H1 (cell line): ENCODE measurements at regions of chr12 and their contacts with region 1.

Region 1: GRCh38 chr12:119020406-119021360 is 39.3 kb downstream of the SRRM4 start:
- DNase-seq: peak; percentile 54 to 94
- H3K4me3 ChIP-seq: peak overlapping the region in 1 of 4 experiments; percentile 31; a peak in 1 of 8 replicates
- H3K27ac ChIP-seq: no peak overlapping the region
- H3K4me1 ChIP-seq: peaks cover 6 to 26% (median 17%) of the 10 kb centered on the region in 4 experiments; a peak in 6 of 7 replicates
- H3K27me3 ChIP-seq: no peaks in the 10 kb centered on the region
- CTCF ChIP-seq: peak; percentile 93 to 99 (median 98)
- EP300 ChIP-seq: no peak
- POLR2A ChIP-seq: no peak
- RAD21 ChIP-seq: peak; percentile 82

Region 2: DNA sequence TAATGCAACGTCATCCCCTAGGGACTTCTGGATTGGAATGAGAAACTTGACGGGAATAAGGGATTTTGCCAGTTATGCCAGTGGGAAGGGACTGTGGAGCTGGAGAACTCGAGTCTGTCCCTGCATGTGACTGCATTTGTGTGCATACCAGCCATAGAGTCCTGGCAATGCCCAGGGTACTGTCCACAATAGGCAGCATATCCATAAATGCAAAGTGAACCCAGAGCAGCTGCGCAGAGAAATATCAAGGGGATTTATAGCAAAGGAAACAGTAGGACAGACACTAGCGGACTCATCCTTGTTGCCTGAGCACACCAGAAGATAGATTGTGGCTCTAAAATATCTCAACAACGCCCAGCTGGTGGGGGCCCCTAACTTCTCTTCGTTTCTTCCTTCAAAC is 286.4 kb before region 1 on chr12:
- CTCF ChIA-PET with region 1: no interaction called
- POLR2A ChIA-PET with region 1: no interaction called
- DNase-seq: no peak
- H3K4me3 ChIP-seq: no peak overlapping the region
- H3K27ac ChIP-seq: no peak overlapping the region
- H3K4me1 ChIP-seq: no peaks in the 10 kb centered on the region
- H3K27me3 ChIP-seq: no peaks in the 10 kb centered on the region
- CTCF ChIP-seq: no peak
- EP300 ChIP-seq: no peak
- POLR2A ChIP-seq: no peak
- RAD21 ChIP-seq: no peak

Region 3: DNA sequence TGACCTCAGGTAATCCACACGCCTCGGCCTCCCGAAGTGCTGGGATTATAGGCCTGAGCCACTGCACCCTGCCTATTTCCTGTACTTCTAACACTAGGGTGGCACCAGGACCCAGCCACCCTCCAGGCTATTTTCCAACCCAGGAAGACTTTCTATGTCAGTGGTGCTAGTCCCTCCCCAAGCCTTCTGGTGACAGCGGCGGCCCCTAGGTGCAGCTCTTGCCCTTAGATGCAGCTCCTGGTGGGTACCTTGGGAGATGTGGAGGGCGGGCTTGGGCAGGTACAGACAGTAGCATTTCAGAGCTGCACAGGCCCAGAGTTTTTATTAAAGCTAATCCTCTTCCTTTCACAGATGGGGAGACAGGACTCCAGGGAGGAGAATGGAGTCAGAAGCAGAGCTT is 23.4 kb after region 1 on chr12:
- CTCF ChIA-PET with region 1: interaction called, 17 read pairs
- POLR2A ChIA-PET with region 1: no interaction called
- DNase-seq: no peak
- H3K4me3 ChIP-seq: no peak overlapping the region
- H3K27ac ChIP-seq: no peak overlapping the region
- H3K4me1 ChIP-seq: no peaks in the 10 kb centered on the region
- H3K27me3 ChIP-seq: no peaks in the 10 kb centered on the region
- CTCF ChIP-seq: no peak
- EP300 ChIP-seq: no peak
- POLR2A ChIP-seq: no peak
- RAD21 ChIP-seq: no peak; a peak in 1 of 4 replicates

Region 4: GRCh38 chr12:119117941-119118340 is 97.3 kb after region 1 on chr12:
- CTCF ChIA-PET with region 1: no interaction called
- POLR2A ChIA-PET with region 1: no interaction called
- DNase-seq: no peak
- H3K4me3 ChIP-seq: no peak overlapping the region
- H3K27ac ChIP-seq: no peak overlapping the region
- H3K4me1 ChIP-seq: 0 out of 7 replicates have a peak, but pooled peaks cover 0 to 2% (median 0%) of the 10 kb centered on the region in 4 experiments
- H3K27me3 ChIP-seq: no peaks in the 10 kb centered on the region
- CTCF ChIP-seq: no peak
- EP300 ChIP-seq: no peak
- POLR2A ChIP-seq: no peak
- RAD21 ChIP-seq: no peak

Region 5: DNA sequence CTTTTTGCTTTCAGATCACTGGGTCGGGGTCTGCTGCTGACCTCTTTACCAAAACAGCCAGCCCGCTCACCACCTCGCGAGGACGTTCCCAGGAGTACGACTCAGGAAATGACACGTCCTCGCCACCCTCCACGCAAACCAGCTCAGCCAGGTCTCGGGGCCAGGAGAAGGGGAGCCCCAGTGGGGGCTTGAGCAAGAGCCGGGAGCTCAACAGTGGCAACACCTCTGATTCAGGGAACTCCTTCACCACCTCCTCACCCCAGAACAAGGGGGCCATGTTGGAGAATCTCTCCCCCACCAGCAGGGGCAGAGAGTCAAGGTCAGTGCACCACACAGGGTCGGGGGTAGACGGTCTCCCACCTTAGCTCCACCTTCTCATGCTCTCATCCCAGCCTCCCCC is 124.7 kb after region 1 on chr12:
- CTCF ChIA-PET with region 1: no interaction called
- POLR2A ChIA-PET with region 1: no interaction called
- DNase-seq: peak in 1 of 2 experiments; percentile 59
- H3K4me3 ChIP-seq: peak overlapping the region in 1 of 4 experiments; percentile 16; a peak in 1 of 8 replicates
- H3K27ac ChIP-seq: peak overlapping the region; percentile 51; the same call in 1 of the 2 replicates
- H3K4me1 ChIP-seq: peaks cover 0 to 14% (median 9%) of the 10 kb centered on the region in 4 experiments; a peak in 5 of 7 replicates
- H3K27me3 ChIP-seq: no peaks in the 10 kb centered on the region
- CTCF ChIP-seq: peak in 2 of 3 experiments; percentile 24 to 49; a peak in 2 of 4 replicates
- EP300 ChIP-seq: no peak
- POLR2A ChIP-seq: 0 out of 3 replicates have a peak, but pooled peaks of 1 of the 2 experiments have one; percentile 23
- RAD21 ChIP-seq: no peak; a peak in 1 of 4 replicates

Region 6: DNA sequence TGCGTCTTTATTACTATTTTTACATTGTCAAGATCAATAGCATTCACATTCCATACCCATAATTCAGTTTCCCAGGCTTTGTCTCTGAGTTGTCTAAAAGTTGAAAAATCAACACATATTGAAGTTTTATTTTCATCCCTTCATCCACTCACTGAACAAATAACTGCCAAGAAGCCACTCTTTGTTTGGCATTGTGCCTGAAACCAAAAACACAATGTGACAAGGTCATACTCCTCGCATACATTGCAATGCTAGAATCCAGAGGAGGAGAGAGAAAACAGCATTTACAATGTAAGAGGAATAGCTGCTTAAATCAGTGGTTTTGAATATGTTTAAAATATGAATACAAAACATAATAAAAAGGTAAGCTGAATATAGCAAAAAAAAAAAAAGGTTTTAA is 385.6 kb after region 1 on chr12:
- CTCF ChIA-PET with region 1: no interaction called
- POLR2A ChIA-PET with region 1: no interaction called
- DNase-seq: no peak
- H3K4me3 ChIP-seq: no peak overlapping the region
- H3K27ac ChIP-seq: no peak overlapping the region
- H3K4me1 ChIP-seq: peaks cover 0 to 2% (median 0%) of the 10 kb centered on the region in 4 experiments; a peak in 2 of 7 replicates
- H3K27me3 ChIP-seq: no peaks in the 10 kb centered on the region
- CTCF ChIP-seq: no peak
- EP300 ChIP-seq: no peak
- POLR2A ChIP-seq: no peak
- RAD21 ChIP-seq: no peak